GM12878 (cell line): ENCODE measurements at regions of chr17 and their contacts with region 1.

Region 1: GRCh38 chr17:37447641-37448040 is 41.0 kb downstream of the TADA2A start:
- DNase-seq: no peak
- ATAC-seq: no peak
- H3K4me3 ChIP-seq: no peak overlapping the region
- H3K27ac ChIP-seq: no peak overlapping the region
- H3K4me1 ChIP-seq: no peaks in the 10 kb centered on the region
- H3K27me3 ChIP-seq: no peaks in the 10 kb centered on the region
- CTCF ChIP-seq: no peak
- EP300 ChIP-seq: no peak
- POLR2A ChIP-seq: no peak
- RAD21 ChIP-seq: no peak

Region 2: GRCh38 chr17:37430051-37430627 is 17.5 kb before region 1 on chr17:
- CTCF ChIA-PET with region 1: interaction called, 6 read pairs
- POLR2A ChIA-PET with region 1: interaction called, 5 read pairs
- RAD21 ChIA-PET with region 1: interaction called, 15 read pairs
- SMC1A ChIA-PET with region 1: interaction called, 18 read pairs
- in situ Hi-C with region 1: no loop called
- intact Hi-C with region 1: no loop called
- DNase-seq: no peak
- ATAC-seq: peak; percentile 94
- H3K4me3 ChIP-seq: no peak overlapping the region
- H3K27ac ChIP-seq: peak overlapping the region; percentile 58; the same call in 1 of the 2 replicates
- H3K4me1 ChIP-seq: peaks cover 6% of the 10 kb centered on the region; the same call in 1 of the 2 replicates
- H3K27me3 ChIP-seq: no peaks in the 10 kb centered on the region
- CTCF ChIP-seq: no peak
- EP300 ChIP-seq: 0 out of 4 replicates have a peak, but pooled peaks of 1 of the 2 experiments have one; percentile 23
- POLR2A ChIP-seq: no peak
- RAD21 ChIP-seq: no peak